Kidney (tissue), 22 donors: ENCODE measurements at regions of chr19 and their contacts with region 1.

Region 1: DNA sequence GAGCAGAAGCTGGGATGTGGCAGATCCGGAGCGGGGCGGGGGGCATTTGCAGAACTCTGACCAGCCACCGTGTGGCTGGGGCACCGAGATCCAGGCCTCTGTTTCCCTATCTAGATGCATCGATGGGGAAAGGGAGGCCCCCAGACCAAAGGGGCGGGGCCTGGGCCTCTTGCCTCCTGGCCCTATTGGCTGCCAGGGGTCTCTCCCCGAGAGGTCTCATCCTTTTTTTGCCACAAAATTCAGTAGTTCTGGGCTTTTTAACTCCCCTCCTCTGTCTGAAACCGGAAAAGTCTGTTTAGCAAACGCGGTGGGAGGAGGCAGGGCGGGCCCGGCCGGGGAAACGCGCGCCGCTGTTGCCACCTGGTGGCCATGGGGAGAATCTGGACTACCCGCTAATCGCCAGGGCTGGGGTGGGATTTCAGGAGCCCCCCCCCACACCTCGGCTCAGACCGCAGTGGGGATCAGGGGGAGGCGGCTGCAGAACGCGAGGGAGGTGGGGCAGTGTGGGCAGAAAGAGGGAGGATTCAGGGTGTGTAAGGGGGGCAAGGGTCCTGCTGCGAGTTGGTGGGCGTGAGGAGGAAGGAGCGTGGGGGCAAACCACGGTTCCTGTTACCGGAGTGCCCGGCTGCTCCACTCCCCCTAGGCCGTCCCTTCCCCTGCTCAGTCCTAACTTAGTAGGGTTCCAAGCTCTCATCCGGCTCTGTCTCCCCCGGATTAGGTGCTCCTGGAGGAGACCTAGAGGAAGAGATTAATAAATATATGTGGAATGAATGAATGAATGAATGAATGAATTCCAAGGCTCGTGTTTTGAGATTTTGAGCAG is 28.3 kb downstream of the IL12RB1 start:
- DNase-seq: peak; percentile 88 to 94 (median 91)
- H3K4me3 ChIP-seq: peak overlapping the region in 1 of 3 donors; percentile 31
- H3K27ac ChIP-seq: peak overlapping the region; percentile 69 to 79
- H3K4me1 ChIP-seq: peaks cover 0 to 4% (median 2%) of the 10 kb centered on the region in 3 donors
- H3K27me3 ChIP-seq: no peaks in the 10 kb centered on the region
- CTCF ChIP-seq: peak; percentile 90

Region 2: DNA sequence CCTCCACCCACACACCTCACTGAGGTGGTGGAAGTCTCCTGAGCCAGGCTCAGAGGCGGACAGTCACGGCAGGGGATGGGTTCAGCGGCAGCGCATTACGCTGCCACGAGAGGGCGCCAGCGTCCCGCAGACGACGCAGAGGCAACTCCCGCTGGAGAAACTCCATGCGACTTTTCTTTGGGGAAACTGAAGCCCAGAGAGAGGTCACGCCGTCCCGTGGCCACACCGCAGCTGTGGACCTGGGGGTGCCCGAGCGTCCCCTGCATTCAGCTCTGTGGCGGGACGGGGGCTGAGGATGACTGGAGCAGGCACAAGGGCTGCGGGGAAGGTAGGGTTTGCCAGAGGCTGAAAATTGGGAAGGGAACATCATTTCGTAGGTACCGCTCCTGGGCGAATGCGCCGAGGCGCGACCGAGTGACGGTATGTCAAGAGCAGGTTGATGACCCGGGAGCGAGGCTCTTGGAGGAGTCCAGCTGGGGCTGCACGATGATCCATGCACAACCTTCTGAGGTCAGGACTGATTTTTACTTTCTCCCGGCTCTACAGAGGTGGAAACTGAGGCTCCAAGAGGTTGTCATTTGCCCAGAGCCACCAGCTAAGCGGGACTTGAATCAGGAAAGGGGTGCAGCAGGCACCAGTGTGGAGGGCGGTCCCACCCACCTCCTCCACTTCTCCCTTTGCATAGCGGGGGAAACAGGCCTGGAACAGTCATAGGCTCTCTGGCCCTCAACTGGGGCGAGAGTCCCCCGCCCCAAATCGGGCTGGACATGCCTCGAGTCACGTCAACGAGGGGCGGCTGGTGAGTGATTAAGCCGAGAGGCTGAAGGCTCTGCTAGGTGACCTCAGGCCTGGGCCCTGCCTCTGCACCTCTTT is 51.1 kb before region 1 on chr19:
- intact Hi-C with region 1: loop called (anchors 5 kb)
- DNase-seq: peak; percentile 84 to 93 (median 88)
- H3K4me3 ChIP-seq: peak overlapping the region; percentile 42 to 78 (median 69)
- H3K27ac ChIP-seq: peak overlapping the region; percentile 83 to 85
- H3K4me1 ChIP-seq: peaks cover 0 to 16% (median 5%) of the 10 kb centered on the region in 3 donors
- H3K27me3 ChIP-seq: no peaks in the 10 kb centered on the region
- CTCF ChIP-seq: peak; percentile 99